ENCODE measurements at regions of chr1 and their contacts with region 1.

Region 1: GRCh38 chr1:10530281-10530740 is 55.6 kb downstream of the PEX14 start:
- DNase-seq: peak in 4 of 5 donors; percentile 35 to 68 (median 38)
- ATAC-seq: peak in 3 of 4 donors; percentile 17 to 61 (median 35)
- H3K4me3 ChIP-seq: no peak overlapping the region
- H3K27ac ChIP-seq: peak overlapping the region in 3 of 12 donors; percentile 3 to 71 (median 66)
- H3K4me1 ChIP-seq: peaks cover 0 to 51% (median 31%) of the 10 kb centered on the region in 12 donors
- H3K27me3 ChIP-seq: no peaks in the 10 kb centered on the region
- CTCF ChIP-seq: peak; percentile 39 to 78 (median 68)
- POLR2A ChIP-seq: no peak

Region 2: GRCh38 chr1:10635085-10635896 is 105.0 kb after region 1 on chr1:
- intact Hi-C with region 1: loop called in 3 of 10 experiments (anchors 10 kb)
- DNase-seq: peak in 2 of 5 donors; percentile 44 to 73
- ATAC-seq: peak in 3 of 4 donors; percentile 25 to 50 (median 40)
- H3K4me3 ChIP-seq: no peak overlapping the region
- H3K27ac ChIP-seq: peak overlapping the region; percentile 15 to 77 (median 56)
- H3K4me1 ChIP-seq: peaks cover 0 to 35% (median 18%) of the 10 kb centered on the region in 12 donors
- H3K27me3 ChIP-seq: peaks cover 0 to 7% (median 0%) of the 10 kb centered on the region in 9 donors
- CTCF ChIP-seq: peak in 1 of 12 donors; percentile 16
- POLR2A ChIP-seq: no peak

Region 3: GRCh38 chr1:10646347-10646861 is 116.1 kb after region 1 on chr1:
- intact Hi-C with region 1: loop called in 2 of 10 experiments (anchors 10 kb)
- DNase-seq: peak in 4 of 5 donors; percentile 54 to 78 (median 68)
- ATAC-seq: peak; percentile 86 to 89 (median 88)
- H3K4me3 ChIP-seq: no peak overlapping the region
- H3K27ac ChIP-seq: peak overlapping the region in 6 of 12 donors; percentile 34 to 61 (median 45)
- H3K4me1 ChIP-seq: peaks cover 0 to 16% (median 0%) of the 10 kb centered on the region in 12 donors
- H3K27me3 ChIP-seq: no peaks in the 10 kb centered on the region
- CTCF ChIP-seq: peak in 3 of 12 donors; percentile 11 to 41 (median 26)
- POLR2A ChIP-seq: no peak

Region 4: GRCh38 chr1:10663678-10664035 is 133.3 kb after region 1 on chr1:
- intact Hi-C with region 1: loop called in 1 of 10 experiments (anchors 10 kb)
- DNase-seq: peak; percentile 65 to 85 (median 75)
- ATAC-seq: peak; percentile 71 to 78 (median 76)
- H3K4me3 ChIP-seq: peak overlapping the region in 1 of 12 donors; percentile 16
- H3K27ac ChIP-seq: peak overlapping the region; percentile 78 to 98 (median 91)
- H3K4me1 ChIP-seq: peaks cover 4 to 66% (median 44%) of the 10 kb centered on the region in 12 donors
- H3K27me3 ChIP-seq: no peaks in the 10 kb centered on the region
- CTCF ChIP-seq: no peak
- POLR2A ChIP-seq: peak; percentile 31 to 34

Measured in heart left ventricle (tissue), 16 donors.